Endothelial cell of umbilical vein (primary cell): ENCODE measurements at regions of chr7 and their contacts with region 1.

Region 1: DNA sequence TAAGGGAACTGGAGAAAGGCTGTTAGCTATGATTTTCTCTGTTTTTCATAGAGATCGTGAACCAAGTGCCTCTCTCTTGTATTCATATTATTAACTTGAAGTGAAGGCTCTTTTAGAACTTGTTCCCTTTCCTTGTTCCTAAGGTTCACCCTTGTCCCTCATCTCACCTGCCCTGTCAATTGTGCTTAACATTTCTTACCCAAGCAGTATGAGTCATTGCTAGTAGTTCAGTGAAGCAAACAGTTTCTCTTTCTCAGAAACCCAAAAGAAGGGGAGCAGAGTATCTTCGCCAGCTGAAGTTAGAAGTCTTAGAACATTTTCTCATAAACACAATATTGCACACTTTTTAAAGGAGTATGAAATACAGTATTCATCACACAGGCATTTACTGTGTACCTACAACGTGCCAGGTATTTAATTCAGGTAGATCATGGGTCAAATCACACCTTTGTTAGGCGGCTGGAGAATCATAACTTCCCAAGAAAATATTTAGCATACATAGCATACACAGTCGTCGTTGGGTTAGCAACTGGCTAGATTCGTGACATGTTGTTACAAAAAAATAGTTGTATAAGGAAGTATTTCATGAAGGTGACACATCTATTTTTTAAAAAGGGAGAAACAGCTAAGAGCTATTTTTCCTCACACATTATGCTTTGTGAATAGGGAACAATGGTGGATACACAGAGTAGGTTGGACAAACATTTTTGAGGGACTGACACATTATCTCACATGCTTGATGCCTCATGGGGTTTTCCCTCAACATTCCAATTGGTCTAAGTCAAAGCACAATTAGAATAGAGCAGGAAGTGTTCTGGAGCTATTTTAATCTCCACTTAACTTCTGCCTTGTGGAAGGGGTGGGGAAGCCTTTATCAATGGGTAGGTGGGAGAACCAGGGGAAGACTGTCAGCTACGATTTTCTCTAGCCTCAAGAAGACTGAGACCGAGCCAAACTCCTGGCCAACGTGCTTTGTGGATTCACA is 13.2 kb downstream of the HDAC9 start:
- DNase-seq: peak; percentile 93
- H3K4me3 ChIP-seq: peak overlapping the region in 1 of 3 experiments; percentile 64
- H3K27ac ChIP-seq: peak overlapping the region; percentile 94
- H3K4me1 ChIP-seq: peaks cover 31% of the 10 kb centered on the region
- H3K27me3 ChIP-seq: no peaks in the 10 kb centered on the region
- CTCF ChIP-seq: no peak
- POLR2A ChIP-seq: no peak

Region 2: GRCh38 chr7:18393465-18394118 is 115.1 kb before region 1 on chr7:
- CTCF ChIA-PET with region 1: no interaction called
- POLR2A ChIA-PET with region 1: no interaction called
- dilution Hi-C with region 1: no loop called
- intact Hi-C with region 1: loop called (anchors 1 kb)
- DNase-seq: peak; percentile 52
- H3K4me3 ChIP-seq: no peak overlapping the region
- H3K27ac ChIP-seq: no peak overlapping the region
- H3K4me1 ChIP-seq: peaks cover 16% of the 10 kb centered on the region
- H3K27me3 ChIP-seq: no peaks in the 10 kb centered on the region
- CTCF ChIP-seq: no peak
- POLR2A ChIP-seq: no peak

Region 3: GRCh38 chr7:18541181-18541870 is 32.6 kb after region 1 on chr7:
- CTCF ChIA-PET with region 1: interaction called, 3 read pairs
- POLR2A ChIA-PET with region 1: no interaction called
- dilution Hi-C with region 1: no loop called
- intact Hi-C with region 1: loop called (anchors 1 kb)
- DNase-seq: peak; percentile 88
- H3K4me3 ChIP-seq: no peak overlapping the region
- H3K27ac ChIP-seq: peak overlapping the region; percentile 62
- H3K4me1 ChIP-seq: peaks cover 4% of the 10 kb centered on the region
- H3K27me3 ChIP-seq: no peaks in the 10 kb centered on the region
- CTCF ChIP-seq: no peak
- POLR2A ChIP-seq: no peak

Region 4: DNA sequence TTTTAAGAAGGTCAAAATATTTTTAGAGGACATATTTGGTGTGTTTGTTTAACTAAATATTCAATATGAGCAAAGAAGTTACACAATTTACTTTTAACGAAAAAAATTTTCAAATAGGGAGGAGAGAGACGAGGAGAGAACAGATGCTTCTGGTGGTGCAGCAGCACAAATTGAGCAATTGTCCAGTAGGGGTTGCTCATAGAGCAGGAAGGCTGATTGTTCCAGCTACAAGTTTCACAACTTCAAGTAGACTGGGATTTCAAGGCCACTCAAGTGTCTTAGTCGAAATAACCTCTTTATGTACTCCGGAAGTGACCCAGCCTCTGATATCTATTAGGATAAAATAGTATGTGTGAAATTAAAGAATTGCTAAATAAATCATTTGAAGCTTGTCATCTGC is 184.7 kb after region 1 on chr7:
- CTCF ChIA-PET with region 1: no interaction called
- POLR2A ChIA-PET with region 1: no interaction called
- dilution Hi-C with region 1: no loop called
- intact Hi-C with region 1: no loop called
- DNase-seq: peak; percentile 64
- H3K4me3 ChIP-seq: no peak overlapping the region
- H3K27ac ChIP-seq: no peak overlapping the region
- H3K4me1 ChIP-seq: no peaks in the 10 kb centered on the region
- H3K27me3 ChIP-seq: no peaks in the 10 kb centered on the region
- CTCF ChIP-seq: peak; percentile 34 to 59
- POLR2A ChIP-seq: no peak